B cell (primary cell): ENCODE measurements at regions of chr3 and their contacts with region 1.

Region 1: GRCh38 chr3:62665598-62666437 is 209.4 kb downstream of the CADPS start:
- DNase-seq: peak; percentile 18
- ATAC-seq: no peak
- H3K4me3 ChIP-seq: no peak overlapping the region
- H3K4me3 Mint-ChIP-seq: no peak overlapping the region
- H3K27ac ChIP-seq: no peak overlapping the region
- H3K27ac Mint-ChIP-seq: no peak overlapping the region
- H3K4me1 ChIP-seq: no peaks in the 10 kb centered on the region
- H3K4me1 Mint-ChIP-seq: no peaks in the 10 kb centered on the region
- H3K27me3 ChIP-seq: no peaks in the 10 kb centered on the region
- H3K27me3 Mint-ChIP-seq: peaks cover 3% of the 10 kb centered on the region
- CTCF ChIP-seq: no peak

Region 2: GRCh38 chr3:62803276-62803675 is 137.5 kb after region 1 on chr3:
- CTCF ChIA-PET with region 1: no interaction called
- POLR2A ChIA-PET with region 1: no interaction called
- intact Hi-C with region 1: no loop called
- DNase-seq: no peak
- ATAC-seq: no peak
- H3K4me3 ChIP-seq: no peak overlapping the region
- H3K4me3 Mint-ChIP-seq: no peak overlapping the region
- H3K27ac ChIP-seq: no peak overlapping the region
- H3K27ac Mint-ChIP-seq: no peak overlapping the region
- H3K4me1 ChIP-seq: no peaks in the 10 kb centered on the region
- H3K4me1 Mint-ChIP-seq: no peaks in the 10 kb centered on the region
- H3K27me3 ChIP-seq: no peaks in the 10 kb centered on the region
- H3K27me3 Mint-ChIP-seq: no peaks in the 10 kb centered on the region
- CTCF ChIP-seq: no peak

Region 3: DNA sequence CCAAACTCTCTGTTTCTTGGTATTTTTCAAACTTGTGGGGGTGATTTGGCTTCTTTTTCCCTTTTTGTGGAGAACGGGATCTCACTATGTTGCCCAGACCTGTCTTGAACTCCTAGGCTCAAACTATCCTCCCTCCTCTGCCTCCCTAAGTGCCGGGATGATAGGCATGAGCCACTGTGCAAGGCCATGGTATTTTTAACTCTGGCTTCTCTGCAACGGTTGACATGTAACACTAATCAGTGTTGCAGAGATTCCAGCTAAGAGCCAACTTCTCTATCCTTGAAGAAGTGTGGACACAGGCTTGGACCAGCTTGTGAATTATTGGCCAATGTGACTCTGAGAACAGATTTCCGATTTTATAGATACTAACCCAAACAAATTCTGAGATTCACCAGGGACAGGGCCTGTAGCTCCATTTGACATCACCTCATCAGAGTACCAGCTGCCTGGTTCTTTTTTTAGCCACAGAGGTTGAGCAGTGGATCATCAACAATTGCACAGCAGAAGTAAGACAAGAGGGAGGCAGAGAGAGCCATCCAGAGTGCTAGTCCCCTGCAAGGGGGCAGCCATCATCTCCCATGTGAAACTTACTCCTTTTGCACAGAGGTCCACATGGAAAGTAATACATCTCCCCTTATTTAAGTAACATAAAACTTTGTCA is 514.2 kb after region 1 on chr3:
- CTCF ChIA-PET with region 1: no interaction called
- POLR2A ChIA-PET with region 1: no interaction called
- intact Hi-C with region 1: no loop called
- DNase-seq: no peak
- ATAC-seq: no peak
- H3K4me3 ChIP-seq: no peak overlapping the region
- H3K4me3 Mint-ChIP-seq: no peak overlapping the region
- H3K27ac ChIP-seq: no peak overlapping the region
- H3K27ac Mint-ChIP-seq: no peak overlapping the region
- H3K4me1 ChIP-seq: no peaks in the 10 kb centered on the region
- H3K4me1 Mint-ChIP-seq: no peaks in the 10 kb centered on the region
- H3K27me3 ChIP-seq: no peaks in the 10 kb centered on the region
- H3K27me3 Mint-ChIP-seq: no peaks in the 10 kb centered on the region
- CTCF ChIP-seq: no peak

Region 4: GRCh38 chr3:63193629-63194028 is 527.8 kb after region 1 on chr3:
- CTCF ChIA-PET with region 1: interaction called, 10 read pairs
- POLR2A ChIA-PET with region 1: no interaction called
- intact Hi-C with region 1: no loop called
- DNase-seq: no peak
- ATAC-seq: no peak
- H3K4me3 ChIP-seq: no peak overlapping the region
- H3K4me3 Mint-ChIP-seq: no peak overlapping the region
- H3K27ac ChIP-seq: no peak overlapping the region
- H3K27ac Mint-ChIP-seq: no peak overlapping the region
- H3K4me1 ChIP-seq: no peaks in the 10 kb centered on the region
- H3K4me1 Mint-ChIP-seq: no peaks in the 10 kb centered on the region
- H3K27me3 ChIP-seq: no peaks in the 10 kb centered on the region
- H3K27me3 Mint-ChIP-seq: peaks cover 3% of the 10 kb centered on the region
- CTCF ChIP-seq: no peak

Region 5: GRCh38 chr3:63228087-63229023 is 562.5 kb after region 1 on chr3:
- CTCF ChIA-PET with region 1: no interaction called
- POLR2A ChIA-PET with region 1: no interaction called
- intact Hi-C with region 1: loop called (anchors 10 kb)
- DNase-seq: peak; percentile 3
- ATAC-seq: no peak
- H3K4me3 ChIP-seq: no peak overlapping the region
- H3K4me3 Mint-ChIP-seq: no peak overlapping the region
- H3K27ac ChIP-seq: no peak overlapping the region
- H3K27ac Mint-ChIP-seq: no peak overlapping the region
- H3K4me1 ChIP-seq: no peaks in the 10 kb centered on the region
- H3K4me1 Mint-ChIP-seq: peaks cover 5% of the 10 kb centered on the region
- H3K27me3 ChIP-seq: no peaks in the 10 kb centered on the region
- H3K27me3 Mint-ChIP-seq: no peaks in the 10 kb centered on the region
- CTCF ChIP-seq: peak; percentile 19